Endothelial cell of umbilical vein (primary cell): ENCODE measurements at regions of chr15 and their contacts with region 1.

Region 1: DNA sequence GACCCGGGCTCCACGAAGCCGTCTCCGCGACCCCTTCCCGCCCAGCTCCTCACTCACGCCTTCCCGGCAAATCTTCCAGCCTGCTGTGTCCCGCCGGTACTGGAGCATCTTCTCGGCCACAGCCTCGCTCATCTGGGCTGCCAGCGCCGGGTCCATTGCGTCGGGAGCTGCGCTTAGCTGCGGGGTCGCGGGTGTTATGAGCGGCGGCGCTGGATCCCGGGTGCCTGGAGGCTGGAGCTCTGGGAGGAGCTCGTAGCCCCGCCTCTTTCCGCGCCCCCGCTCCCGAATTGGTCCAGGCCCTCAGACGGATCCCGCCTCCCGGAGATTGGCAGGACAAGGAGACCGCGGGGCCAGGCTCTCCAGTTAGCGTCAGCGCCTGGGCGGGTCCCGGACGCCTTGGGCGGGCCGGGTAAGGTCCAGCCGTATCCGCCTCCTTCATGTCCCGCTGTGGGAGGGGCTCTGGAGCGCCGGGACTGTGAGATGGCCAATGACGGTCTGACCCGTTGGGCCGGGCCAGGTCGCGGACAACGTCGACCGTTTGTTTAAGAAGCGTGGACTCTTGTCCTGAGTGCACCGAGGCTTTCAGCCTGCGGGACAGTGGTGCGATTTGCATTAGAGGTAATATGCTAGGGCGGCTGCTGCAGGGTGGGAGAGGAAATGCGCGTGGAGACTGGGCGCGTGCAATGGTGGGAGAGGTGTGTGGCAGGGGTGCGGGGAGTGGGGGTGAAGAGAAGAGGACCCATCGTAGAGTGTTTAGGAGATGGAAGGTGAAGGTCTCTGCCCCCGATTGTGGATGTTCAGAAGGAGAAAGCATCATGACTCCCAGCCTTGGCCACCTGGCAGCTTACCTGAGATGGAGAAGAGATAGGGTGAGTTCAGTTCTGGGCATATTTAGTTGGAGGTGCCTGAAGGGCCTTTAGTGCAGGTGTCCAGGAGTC is at the start of gene STARD5:
- DNase-seq: peak; percentile 97
- H3K4me3 ChIP-seq: peak within 1 kb of the TSS; percentile 77 to 89 (median 79)
- H3K27ac ChIP-seq: peak within 1 kb of the TSS; percentile 36
- H3K4me1 ChIP-seq: peaks cover 8% of the 10 kb centered on the region
- H3K27me3 ChIP-seq: peaks cover 0 to 3% of the 10 kb centered on the region in 2 experiments
- CTCF ChIP-seq: no peak
- POLR2A ChIP-seq: peak; percentile 46
- total RNA-seq, gene STARD5: 0.32 and 2.2 TPM in 2 replicates

Region 2: GRCh38 chr15:80977627-80978036 is 346.6 kb before region 1 on chr15:
- CTCF ChIA-PET with region 1: no interaction called
- POLR2A ChIA-PET with region 1: no interaction called
- dilution Hi-C with region 1: no loop called
- intact Hi-C with region 1: no loop called
- DNase-seq: peak; percentile 62
- H3K4me3 ChIP-seq: no peak overlapping the region
- H3K27ac ChIP-seq: no peak overlapping the region
- H3K4me1 ChIP-seq: peaks cover 10% of the 10 kb centered on the region
- H3K27me3 ChIP-seq: no peaks in the 10 kb centered on the region
- CTCF ChIP-seq: peak; percentile 63 to 83
- POLR2A ChIP-seq: no peak

Region 3: DNA sequence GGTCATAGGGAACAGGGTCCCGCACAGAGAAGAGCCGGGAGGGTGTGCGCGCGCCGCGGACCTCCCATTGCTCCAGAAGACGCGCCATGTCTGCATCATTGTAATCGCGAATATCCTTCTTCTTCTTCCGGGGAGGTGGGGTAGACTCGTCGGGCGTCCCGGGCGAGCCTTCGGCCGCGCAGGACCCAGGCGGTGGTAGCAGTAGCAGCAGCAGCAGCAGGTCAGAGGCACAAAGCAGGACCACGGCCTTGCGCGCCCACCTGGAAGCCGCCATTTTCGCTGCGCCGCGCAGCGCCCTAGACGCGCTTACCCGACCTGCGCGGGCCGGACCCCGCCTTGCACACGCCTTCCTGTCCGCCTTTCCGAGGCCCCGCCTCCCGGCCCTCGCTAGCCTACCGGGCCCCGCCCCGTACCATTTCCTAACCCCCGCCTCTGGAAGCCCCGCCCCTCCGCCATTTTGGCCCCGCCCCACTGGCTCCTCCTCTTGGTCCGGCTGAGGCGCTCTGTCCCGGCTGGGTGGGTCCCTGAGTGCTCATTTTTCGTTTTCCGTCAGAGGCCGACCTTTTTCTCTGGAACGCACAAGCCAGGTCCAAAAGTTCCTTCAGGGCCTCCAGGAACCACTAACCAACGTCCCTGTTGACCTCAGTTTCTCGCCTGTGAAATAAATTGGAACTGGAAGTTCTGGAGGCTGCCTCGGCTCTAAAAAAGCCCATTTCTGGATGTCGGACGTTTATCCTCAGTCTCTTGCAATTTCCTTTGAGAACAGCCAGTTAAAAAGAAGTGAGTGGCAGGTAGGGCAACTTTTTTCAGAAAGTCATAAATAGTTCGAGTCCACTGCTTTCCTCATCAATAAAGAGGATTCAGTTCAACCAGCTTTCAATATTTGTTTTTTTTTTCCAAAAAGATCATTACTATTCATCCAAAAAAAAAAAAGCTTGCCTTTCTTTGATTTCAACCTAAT is 334.4 kb before region 1 on chr15 and contains the start of gene MESD:
- CTCF ChIA-PET with region 1: no interaction called
- POLR2A ChIA-PET with region 1: no interaction called
- dilution Hi-C with region 1: no loop called
- intact Hi-C with region 1: loop called (anchors 1 kb)
- DNase-seq: peak; percentile 96
- H3K4me3 ChIP-seq: peak within 1 kb of the TSS; percentile 61 to 86 (median 77)
- H3K27ac ChIP-seq: peak within 1 kb of the TSS; percentile 75
- H3K4me1 ChIP-seq: peaks cover 18% of the 10 kb centered on the region
- H3K27me3 ChIP-seq: no peaks in the 10 kb centered on the region
- CTCF ChIP-seq: no peak
- POLR2A ChIP-seq: peak; percentile 95
- total RNA-seq, gene MESD: 30.5 and 32.9 TPM in 2 replicates